Naive thymus-derived CD4-positive, alpha-beta T cell (primary cell): ENCODE measurements at regions of chr13 and their contacts with region 1.

Region 1: GRCh38 chr13:30465585-30466357 is at the start of gene HMGB1:
- DNase-seq: peak; percentile 84 to 98 (median 96)
- ATAC-seq: peak; percentile 90
- H3K4me3 ChIP-seq: peak within 1 kb of the TSS; percentile 83
- H3K4me3 Mint-ChIP-seq: peak within 1 kb of the TSS; percentile 86 to 99 (median 94)
- H3K27ac ChIP-seq: peak within 1 kb of the TSS; percentile 97
- H3K27ac Mint-ChIP-seq: peak within 1 kb of the TSS; percentile 93 to 100 (median 98)
- H3K4me1 ChIP-seq: peaks cover 23 to 32% of the 10 kb centered on the region in 2 donors
- H3K4me1 Mint-ChIP-seq: peaks cover 12 to 40% (median 30%) of the 10 kb centered on the region in 7 donors
- H3K27me3 ChIP-seq: no peaks in the 10 kb centered on the region
- H3K27me3 Mint-ChIP-seq: peaks cover 0 to 7% (median 0%) of the 10 kb centered on the region in 5 donors
- total RNA-seq, gene HMGB1: 294 to 530 (median 319) TPM

Region 2: DNA sequence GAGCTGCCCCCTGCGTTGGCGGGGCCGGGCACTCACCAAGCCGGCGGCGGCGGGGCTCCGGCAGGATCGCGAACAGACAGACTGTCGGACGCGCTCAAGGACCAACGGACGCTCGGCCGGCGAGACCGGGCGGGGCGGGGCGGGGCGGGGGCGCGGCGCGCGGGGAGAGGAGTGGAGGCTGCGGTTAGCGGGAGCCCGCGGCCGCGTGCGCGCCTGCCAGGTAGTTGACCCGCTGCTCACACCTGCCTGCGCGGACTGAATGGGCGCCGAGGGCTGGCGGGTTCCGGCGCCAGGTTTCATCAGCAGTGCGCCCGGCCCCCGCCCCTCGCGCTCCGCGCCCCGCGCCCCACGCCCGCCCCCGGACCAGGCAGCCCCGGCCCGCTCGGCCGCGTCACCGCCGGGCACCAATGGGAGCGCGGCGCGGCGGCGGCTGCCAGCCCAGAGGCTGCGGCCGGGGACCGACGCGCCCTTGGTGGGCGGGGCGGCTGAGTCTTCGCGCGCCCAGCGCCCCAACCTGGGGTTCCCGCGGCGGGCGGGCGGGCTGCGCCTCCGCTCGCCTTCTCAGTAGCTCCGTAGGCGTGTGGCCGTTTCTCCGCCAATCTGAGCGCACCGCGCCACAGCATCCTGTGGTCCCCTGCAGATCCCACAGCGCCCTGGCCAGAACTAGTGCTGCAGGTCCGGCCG is 870.2 kb before region 1 on chr13 and contains the start of gene SLC7A1:
- CTCF ChIA-PET with region 1: no interaction called
- POLR2A ChIA-PET with region 1: no interaction called
- intact Hi-C with region 1: loop called (anchors 2 kb)
- DNase-seq: peak; percentile 74 to 93 (median 85)
- ATAC-seq: peak; percentile 95
- H3K4me3 ChIP-seq: peak within 1 kb of the TSS; percentile 73
- H3K4me3 Mint-ChIP-seq: peak within 1 kb of the TSS; percentile 88 to 94 (median 90)
- H3K27ac ChIP-seq: peak within 1 kb of the TSS; percentile 82
- H3K27ac Mint-ChIP-seq: peak within 1 kb of the TSS; percentile 74 to 96 (median 87)
- H3K4me1 ChIP-seq: peaks cover 6 to 7% of the 10 kb centered on the region in 2 donors
- H3K4me1 Mint-ChIP-seq: peaks cover 26 to 49% (median 43%) of the 10 kb centered on the region in 7 donors
- H3K27me3 ChIP-seq: no peaks in the 10 kb centered on the region
- H3K27me3 Mint-ChIP-seq: peaks cover 0 to 3% (median 2%) of the 10 kb centered on the region in 5 donors
- total RNA-seq, gene SLC7A1: 12.2 to 63.8 (median 28.2) TPM

Region 3: GRCh38 chr13:30132623-30133553 is 332.9 kb before region 1 on chr13:
- CTCF ChIA-PET with region 1: interaction called, 33 read pairs
- POLR2A ChIA-PET with region 1: interaction called, 12 read pairs
- intact Hi-C with region 1: loop called (anchors 1 kb)
- DNase-seq: peak; percentile 91 to 98 (median 95)
- ATAC-seq: peak; percentile 99
- H3K4me3 ChIP-seq: peak overlapping the region; percentile 16
- H3K4me3 Mint-ChIP-seq: peak overlapping the region in 8 of 10 donors; percentile 33 to 73 (median 64)
- H3K27ac ChIP-seq: no peak overlapping the region
- H3K27ac Mint-ChIP-seq: peak overlapping the region in 8 of 9 donors; percentile 11 to 89 (median 72)
- H3K4me1 ChIP-seq: peaks cover 4 to 7% of the 10 kb centered on the region in 2 donors
- H3K4me1 Mint-ChIP-seq: peaks cover 12 to 19% (median 17%) of the 10 kb centered on the region in 7 donors
- H3K27me3 ChIP-seq: no peaks in the 10 kb centered on the region
- H3K27me3 Mint-ChIP-seq: no peaks in the 10 kb centered on the region

Region 4: DNA sequence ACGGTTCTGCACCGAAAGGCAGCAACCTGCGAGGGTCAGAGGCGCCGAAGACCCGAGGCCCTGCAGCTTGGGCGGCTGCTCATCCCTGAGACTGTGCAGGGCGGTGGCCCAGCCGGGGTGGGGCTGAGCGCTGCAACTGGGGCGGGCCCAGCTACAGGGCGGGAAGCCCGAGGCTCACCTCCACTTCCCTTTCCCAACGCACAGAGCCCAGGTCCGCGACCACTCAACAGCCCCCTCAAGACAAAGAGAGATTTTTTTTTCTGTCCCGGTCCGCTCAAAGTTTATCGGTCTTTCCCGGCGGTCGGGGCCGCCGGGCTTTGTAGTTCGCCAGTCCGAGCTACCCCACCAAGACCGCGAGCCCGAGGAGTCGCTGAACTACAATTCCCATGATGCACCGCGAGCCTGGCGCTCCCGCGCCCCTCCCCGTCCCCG is 159.0 kb before region 1 on chr13:
- CTCF ChIA-PET with region 1: no interaction called
- POLR2A ChIA-PET with region 1: interaction called, 6 read pairs
- intact Hi-C with region 1: loop called (anchors 1 kb)
- DNase-seq: peak; percentile 78 to 91 (median 88)
- ATAC-seq: peak; percentile 95
- H3K4me3 ChIP-seq: peak overlapping the region; percentile 96
- H3K4me3 Mint-ChIP-seq: peak overlapping the region; percentile 79 to 92 (median 89)
- H3K27ac ChIP-seq: peak overlapping the region; percentile 78
- H3K27ac Mint-ChIP-seq: peak overlapping the region in 8 of 9 donors; percentile 37 to 89 (median 82)
- H3K4me1 ChIP-seq: peaks cover 0 to 4% of the 10 kb centered on the region in 2 donors
- H3K4me1 Mint-ChIP-seq: peaks cover 0 to 48% (median 7%) of the 10 kb centered on the region in 7 donors
- H3K27me3 ChIP-seq: no peaks in the 10 kb centered on the region
- H3K27me3 Mint-ChIP-seq: no peaks in the 10 kb centered on the region

Region 5: GRCh38 chr13:30395192-30396084 is 70.3 kb before region 1 on chr13:
- CTCF ChIA-PET with region 1: interaction called, 4 read pairs
- POLR2A ChIA-PET with region 1: interaction called, 9 read pairs
- intact Hi-C with region 1: loop called (anchors 1 kb)
- DNase-seq: peak; percentile 22 to 83 (median 71)
- ATAC-seq: peak; percentile 82
- H3K4me3 ChIP-seq: peak overlapping the region; percentile 71
- H3K4me3 Mint-ChIP-seq: peak overlapping the region; percentile 83 to 97 (median 88)
- H3K27ac ChIP-seq: peak overlapping the region; percentile 78
- H3K27ac Mint-ChIP-seq: peak overlapping the region; percentile 90 to 97 (median 95)
- H3K4me1 ChIP-seq: peaks cover 16 to 31% of the 10 kb centered on the region in 2 donors
- H3K4me1 Mint-ChIP-seq: peaks cover 17 to 58% (median 54%) of the 10 kb centered on the region in 7 donors
- H3K27me3 ChIP-seq: no peaks in the 10 kb centered on the region
- H3K27me3 Mint-ChIP-seq: no peaks in the 10 kb centered on the region

Region 6: GRCh38 chr13:30551189-30551588 is 85.4 kb after region 1 on chr13:
- CTCF ChIA-PET with region 1: interaction called, 4 read pairs
- POLR2A ChIA-PET with region 1: no interaction called
- intact Hi-C with region 1: loop called (anchors 1 kb)
- DNase-seq: peak in 7 of 9 donors; percentile 22 to 63 (median 44)
- ATAC-seq: peak; percentile 82
- H3K4me3 ChIP-seq: no peak overlapping the region
- H3K4me3 Mint-ChIP-seq: no peak overlapping the region
- H3K27ac ChIP-seq: no peak overlapping the region
- H3K27ac Mint-ChIP-seq: peak overlapping the region in 1 of 9 donors; percentile 26
- H3K4me1 ChIP-seq: no peaks in the 10 kb centered on the region
- H3K4me1 Mint-ChIP-seq: peaks cover 0 to 6% (median 2%) of the 10 kb centered on the region in 7 donors
- H3K27me3 ChIP-seq: no peaks in the 10 kb centered on the region
- H3K27me3 Mint-ChIP-seq: peaks cover 0 to 11% (median 0%) of the 10 kb centered on the region in 5 donors

Region 7: DNA sequence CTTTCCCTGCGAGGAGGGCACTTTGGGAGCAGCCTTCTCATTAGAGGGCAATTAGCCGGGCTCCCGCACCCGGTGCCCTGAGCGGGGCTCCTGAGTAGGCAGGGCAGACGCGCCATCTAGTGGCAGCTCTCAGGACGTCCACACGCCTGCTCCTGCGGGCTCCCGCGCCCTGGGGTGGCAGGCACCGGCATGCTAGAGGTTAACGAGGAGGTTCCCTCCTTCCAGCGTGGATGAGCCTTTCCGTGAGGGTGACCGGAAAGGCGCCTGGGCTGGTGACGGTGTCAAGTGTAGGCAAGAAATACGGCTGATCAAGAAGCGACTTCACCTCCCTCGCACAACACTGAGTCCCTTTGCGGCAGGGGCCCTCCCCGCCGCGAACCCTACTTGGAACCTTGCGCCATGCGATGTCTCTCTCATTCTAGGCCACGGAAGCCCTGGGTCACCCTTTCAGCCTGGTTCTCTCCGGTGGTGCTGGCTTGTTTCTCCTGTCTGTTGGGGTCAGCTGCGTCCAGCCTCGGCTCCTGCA is 337.2 kb after region 1 on chr13:
- CTCF ChIA-PET with region 1: no interaction called
- POLR2A ChIA-PET with region 1: no interaction called
- intact Hi-C with region 1: loop called (anchors 2 kb)
- DNase-seq: peak; percentile 54 to 83 (median 70)
- ATAC-seq: peak; percentile 97
- H3K4me3 ChIP-seq: peak overlapping the region; percentile 27
- H3K4me3 Mint-ChIP-seq: peak overlapping the region; percentile 17 to 75 (median 51)
- H3K27ac ChIP-seq: no peak overlapping the region
- H3K27ac Mint-ChIP-seq: peak overlapping the region in 1 of 9 donors; percentile 12
- H3K4me1 ChIP-seq: peaks cover 3 to 7% of the 10 kb centered on the region in 2 donors
- H3K4me1 Mint-ChIP-seq: peaks cover 5 to 19% (median 10%) of the 10 kb centered on the region in 7 donors
- H3K27me3 ChIP-seq: no peaks in the 10 kb centered on the region
- H3K27me3 Mint-ChIP-seq: peaks cover 0 to 5% (median 0%) of the 10 kb centered on the region in 5 donors